GM23248 (cell line): ENCODE measurements at regions of chr7 and their contacts with region 1.

Region 1: GRCh38 chr7:77759294-77759889 is 38.8 kb downstream of the TMEM60 start:
- DNase-seq: peak; percentile 62
- H3K4me3 ChIP-seq: peak overlapping the region; percentile 50; the same call in 1 of the 2 replicates
- H3K27ac ChIP-seq: no peak overlapping the region
- H3K4me1 ChIP-seq: peaks cover 19% of the 10 kb centered on the region; the same call in 1 of the 2 replicates
- H3K27me3 ChIP-seq: no peaks in the 10 kb centered on the region

Region 2: DNA sequence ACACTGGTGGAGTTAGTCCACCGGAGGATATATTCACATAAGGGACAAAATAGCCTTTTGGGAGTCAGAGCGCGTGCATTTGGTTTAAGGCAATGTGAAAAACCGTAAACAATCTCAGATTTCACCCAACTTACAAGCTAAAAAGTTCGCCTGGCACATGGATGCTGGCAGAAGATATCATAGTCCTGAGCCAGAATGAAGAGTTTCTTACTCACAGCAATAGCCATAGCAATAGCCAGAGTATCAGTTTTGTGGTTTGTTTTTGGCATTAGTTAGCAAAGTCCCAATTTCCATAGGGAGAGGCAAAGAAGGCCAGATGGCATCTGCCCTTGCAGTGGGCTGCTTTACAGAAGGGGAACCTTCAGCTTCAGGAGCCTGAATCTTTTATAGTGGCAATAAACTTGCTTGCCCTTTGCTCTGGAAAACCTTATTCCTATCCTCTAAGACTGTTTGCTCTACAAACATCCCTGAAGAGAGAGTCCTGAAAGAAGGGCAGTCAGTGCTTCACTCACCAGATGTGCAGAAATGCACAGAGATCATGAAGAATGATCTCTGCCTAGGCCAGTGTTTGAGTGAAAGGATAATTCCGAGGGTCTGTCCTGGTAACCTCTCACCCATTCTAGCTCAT is 91.8 kb before region 1 on chr7:
- in situ Hi-C with region 1: loop called (anchors 10 kb)
- DNase-seq: peak; percentile 17
- H3K4me3 ChIP-seq: no peak overlapping the region
- H3K27ac ChIP-seq: no peak overlapping the region
- H3K4me1 ChIP-seq: no peaks in the 10 kb centered on the region
- H3K27me3 ChIP-seq: no peaks in the 10 kb centered on the region

Region 3: GRCh38 chr7:77697029-77697831 is 62.2 kb before region 1 on chr7:
- in situ Hi-C with region 1: no loop called
- DNase-seq: peak; percentile 82
- H3K4me3 ChIP-seq: peak overlapping the region; percentile 95
- H3K27ac ChIP-seq: peak overlapping the region; percentile 84
- H3K4me1 ChIP-seq: peaks cover 28% of the 10 kb centered on the region
- H3K27me3 ChIP-seq: no peaks in the 10 kb centered on the region

Region 4: GRCh38 chr7:77877791-77878190 is 118.4 kb after region 1 on chr7:
- in situ Hi-C with region 1: no loop called
- DNase-seq: peak; percentile 37
- H3K4me3 ChIP-seq: no peak overlapping the region
- H3K27ac ChIP-seq: no peak overlapping the region
- H3K4me1 ChIP-seq: peaks cover 14% of the 10 kb centered on the region
- H3K27me3 ChIP-seq: no peaks in the 10 kb centered on the region